A673 (cell line): ENCODE measurements at regions of chr14 and their contacts with region 1.

Region 1: DNA sequence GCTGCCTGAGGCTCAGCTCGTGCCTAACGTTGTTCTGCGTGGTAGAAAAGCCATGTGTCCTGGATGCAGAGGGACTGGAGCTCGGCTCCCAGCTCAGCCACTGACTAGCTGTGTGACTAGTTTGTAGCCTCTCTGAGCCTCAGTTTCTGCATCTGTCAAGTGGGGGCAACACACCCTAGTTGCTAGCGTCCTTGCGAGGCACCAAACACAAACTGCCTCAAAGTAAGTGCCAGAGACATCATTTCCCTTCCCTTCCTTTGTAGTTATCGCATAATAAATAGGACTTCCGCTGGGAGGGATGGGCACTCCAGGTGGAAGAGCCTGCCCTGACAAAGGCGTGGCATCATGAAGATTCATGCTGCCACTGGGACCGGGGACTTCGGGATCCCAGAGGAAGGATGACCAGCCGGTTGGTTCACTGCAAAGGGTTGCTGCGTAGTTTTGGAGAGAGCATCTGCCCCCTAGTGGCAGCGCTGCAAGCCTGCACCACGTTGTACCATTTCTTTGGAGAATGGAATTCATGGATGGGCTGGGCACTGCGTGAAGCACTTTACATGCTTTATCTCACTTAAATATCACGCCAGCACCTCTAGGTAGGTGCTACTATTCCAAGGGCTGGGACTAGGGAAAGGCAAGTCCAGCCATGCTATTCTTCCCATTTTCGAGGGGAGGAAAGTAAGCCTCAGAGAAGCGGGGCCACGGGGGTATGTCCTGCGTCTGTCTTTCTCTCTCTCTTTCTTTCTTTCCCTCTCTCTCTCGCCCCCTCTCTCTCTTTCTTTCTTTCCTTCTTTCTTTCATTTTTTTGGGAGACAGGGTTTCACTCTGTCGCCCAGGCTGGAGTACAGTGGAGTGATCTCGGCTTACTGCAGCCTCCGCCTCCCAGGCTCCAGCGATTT is 4.6 kb downstream of the CCDC197 start:
- DNase-seq: peak; percentile 69
- H3K4me3 ChIP-seq: no peak overlapping the region
- H3K27ac ChIP-seq: no peak overlapping the region
- H3K4me1 ChIP-seq: peaks cover 4% of the 10 kb centered on the region
- H3K27me3 ChIP-seq: no peaks in the 10 kb centered on the region
- CTCF ChIP-seq: peak; percentile 97

Region 2: DNA sequence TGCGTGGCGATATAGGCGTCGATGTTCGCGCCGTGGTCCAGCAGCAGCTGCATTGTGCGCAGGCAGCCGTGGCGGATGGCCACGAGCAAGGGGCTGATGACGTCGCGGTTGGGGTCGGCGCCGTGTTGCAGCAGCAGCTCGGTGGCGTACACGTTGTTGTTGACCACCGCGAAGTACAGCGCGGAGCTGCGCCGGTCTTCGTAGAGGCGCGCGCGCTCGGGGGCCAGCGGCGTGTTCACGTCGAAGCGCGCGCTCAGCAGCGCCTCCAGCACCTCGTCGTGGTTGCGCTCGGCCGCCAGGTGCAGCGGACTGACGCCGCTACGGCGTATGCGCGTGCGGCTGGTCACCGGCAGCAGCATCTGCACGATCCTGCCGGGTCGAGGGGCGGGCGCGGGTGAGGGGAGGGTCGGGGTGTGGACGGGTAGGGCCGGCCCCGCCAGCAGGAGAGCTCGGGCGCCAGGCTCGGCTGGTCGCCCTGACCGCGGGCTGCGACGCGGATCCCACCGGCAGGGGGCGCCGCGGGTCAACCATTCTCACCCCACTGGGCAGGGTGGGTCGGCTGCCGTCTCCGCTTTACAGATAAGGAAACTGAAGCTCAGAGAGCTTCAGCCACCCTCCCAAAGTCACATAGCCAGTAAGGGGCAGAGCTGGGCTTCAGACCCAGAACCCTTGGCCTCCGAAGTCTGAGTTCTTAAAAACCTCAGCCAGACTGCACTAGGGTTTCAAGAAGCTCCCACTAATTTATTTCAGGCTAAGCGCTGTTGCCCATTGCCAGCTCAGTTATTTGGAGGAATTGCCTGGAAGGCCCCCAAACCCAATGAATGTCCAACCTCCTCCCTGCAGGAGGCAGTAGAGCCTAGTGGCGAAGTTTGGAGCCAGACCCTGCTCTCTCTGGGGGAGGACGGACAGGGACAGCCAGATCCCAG is 62.2 kb before region 1 on chr14:
- CTCF ChIA-PET with region 1: interaction called, 9 read pairs
- POLR2A ChIA-PET with region 1: no interaction called
- intact Hi-C with region 1: loop called (anchors 2 kb)
- DNase-seq: peak; percentile 70
- H3K4me3 ChIP-seq: peak overlapping the region; percentile 24
- H3K27ac ChIP-seq: no peak overlapping the region
- H3K4me1 ChIP-seq: peaks cover 6% of the 10 kb centered on the region
- H3K27me3 ChIP-seq: no peaks in the 10 kb centered on the region
- CTCF ChIP-seq: peak; percentile 67

Region 3: DNA sequence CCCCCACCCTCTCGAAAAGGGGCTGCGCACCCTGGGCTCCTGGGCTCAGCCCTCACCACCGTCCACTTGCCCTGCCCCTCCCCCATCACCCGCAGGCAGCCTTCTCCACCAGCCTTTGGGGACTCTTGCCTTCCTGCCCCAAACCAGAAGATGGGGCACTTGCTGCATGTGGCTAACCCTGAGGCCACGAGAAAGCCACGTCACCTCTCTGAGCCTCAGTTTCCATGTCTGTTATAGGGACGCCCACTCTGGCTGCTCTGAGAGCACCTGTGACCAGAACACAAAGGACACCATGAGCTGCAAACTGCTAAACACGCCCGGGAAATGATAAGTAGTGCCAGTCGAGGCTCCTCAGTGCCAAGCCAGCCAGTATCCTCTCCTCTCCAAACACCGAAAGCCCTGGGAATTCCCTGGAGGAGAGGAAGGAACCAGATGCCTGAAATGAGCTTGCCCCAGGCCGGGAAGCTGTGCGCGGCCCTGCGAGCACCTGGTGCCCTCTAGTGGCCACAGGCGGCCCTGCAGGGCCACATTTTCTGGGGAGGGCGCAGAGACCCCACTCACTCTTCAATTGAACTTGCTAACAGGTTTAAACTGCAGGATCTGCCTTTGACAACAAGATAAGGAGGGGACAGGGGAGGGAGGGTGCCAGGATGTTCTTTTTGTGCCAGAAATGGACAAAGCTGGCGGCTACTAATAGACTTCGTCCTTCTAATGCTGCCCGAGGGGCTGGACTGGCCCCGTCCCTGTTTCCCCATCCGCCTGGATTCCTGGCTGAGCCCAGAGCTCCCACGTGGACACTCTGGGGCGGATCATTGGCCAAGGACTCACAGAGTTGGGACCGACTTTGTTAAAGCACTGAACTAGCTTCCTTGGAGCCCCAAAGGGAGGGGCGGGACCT is 484.4 kb after region 1 on chr14:
- CTCF ChIA-PET with region 1: no interaction called
- POLR2A ChIA-PET with region 1: no interaction called
- intact Hi-C with region 1: no loop called
- DNase-seq: peak; percentile 61
- H3K4me3 ChIP-seq: no peak overlapping the region
- H3K27ac ChIP-seq: no peak overlapping the region
- H3K4me1 ChIP-seq: peaks cover 6% of the 10 kb centered on the region
- H3K27me3 ChIP-seq: peaks cover 4% of the 10 kb centered on the region
- CTCF ChIP-seq: peak; percentile 99

Region 4: DNA sequence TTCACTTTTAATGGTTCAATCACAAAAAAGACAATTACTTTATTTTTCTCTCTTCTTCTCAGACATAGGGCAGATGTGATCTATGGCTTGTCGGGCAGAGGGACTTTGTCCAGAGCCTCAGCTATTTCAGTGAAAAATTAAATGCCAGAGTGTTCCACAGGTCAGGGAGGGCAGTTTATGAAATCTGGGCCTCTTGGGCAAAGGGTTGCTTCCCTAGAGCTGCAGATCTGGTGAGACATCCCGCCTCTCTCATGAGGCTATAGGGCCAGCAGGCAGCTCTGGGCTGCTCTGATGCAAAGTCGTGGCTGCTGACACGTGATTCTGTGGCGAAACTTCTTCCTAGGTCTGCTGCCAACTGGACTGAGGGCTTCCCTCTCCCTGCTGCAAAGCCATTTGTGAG is 1312.0 kb after region 1 on chr14:
- CTCF ChIA-PET with region 1: no interaction called
- POLR2A ChIA-PET with region 1: no interaction called
- intact Hi-C with region 1: no loop called
- DNase-seq: no peak
- H3K4me3 ChIP-seq: no peak overlapping the region
- H3K27ac ChIP-seq: no peak overlapping the region
- H3K4me1 ChIP-seq: peaks cover 5% of the 10 kb centered on the region
- H3K27me3 ChIP-seq: no peaks in the 10 kb centered on the region
- CTCF ChIP-seq: no peak